ENCODE measurements at regions of chr11 and their contacts with region 1.

Region 1: DNA sequence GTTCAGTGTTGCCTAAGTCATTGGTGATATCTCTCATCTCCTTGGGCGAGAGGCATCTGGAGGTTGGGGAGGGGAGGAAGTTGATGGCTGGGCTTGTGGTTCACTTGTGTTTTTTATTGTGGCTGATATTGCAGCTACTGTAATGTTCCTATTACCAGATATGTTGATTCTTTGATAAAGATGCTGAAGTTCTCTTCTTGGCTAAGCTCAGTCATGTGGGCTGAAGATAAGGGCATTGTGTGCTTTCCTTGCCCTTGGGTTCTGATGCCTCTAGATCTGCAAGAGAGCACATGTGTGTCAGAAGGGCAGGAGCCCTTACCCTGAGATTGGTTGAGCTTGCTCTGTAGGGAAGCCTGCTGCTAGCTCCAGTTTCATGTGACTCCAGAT is 12.0 kb downstream of the STX3 start:
- DNase-seq: peak; percentile 79
- ATAC-seq: peak; percentile 78
- H3K4me3 Mint-ChIP-seq: no peak overlapping the region
- H3K27ac Mint-ChIP-seq: no peak overlapping the region
- H3K4me1 Mint-ChIP-seq: peaks cover 36% of the 10 kb centered on the region
- H3K27me3 Mint-ChIP-seq: no peaks in the 10 kb centered on the region

Region 2: GRCh38 chr11:59660621-59661020 is 106.6 kb before region 1 on chr11:
- CTCF ChIA-PET with region 1: no interaction called
- DNase-seq: no peak
- ATAC-seq: no peak
- H3K4me3 Mint-ChIP-seq: no peak overlapping the region
- H3K27ac Mint-ChIP-seq: peak overlapping the region; percentile 40
- H3K4me1 Mint-ChIP-seq: peaks cover 32% of the 10 kb centered on the region
- H3K27me3 Mint-ChIP-seq: no peaks in the 10 kb centered on the region

Region 3: DNA sequence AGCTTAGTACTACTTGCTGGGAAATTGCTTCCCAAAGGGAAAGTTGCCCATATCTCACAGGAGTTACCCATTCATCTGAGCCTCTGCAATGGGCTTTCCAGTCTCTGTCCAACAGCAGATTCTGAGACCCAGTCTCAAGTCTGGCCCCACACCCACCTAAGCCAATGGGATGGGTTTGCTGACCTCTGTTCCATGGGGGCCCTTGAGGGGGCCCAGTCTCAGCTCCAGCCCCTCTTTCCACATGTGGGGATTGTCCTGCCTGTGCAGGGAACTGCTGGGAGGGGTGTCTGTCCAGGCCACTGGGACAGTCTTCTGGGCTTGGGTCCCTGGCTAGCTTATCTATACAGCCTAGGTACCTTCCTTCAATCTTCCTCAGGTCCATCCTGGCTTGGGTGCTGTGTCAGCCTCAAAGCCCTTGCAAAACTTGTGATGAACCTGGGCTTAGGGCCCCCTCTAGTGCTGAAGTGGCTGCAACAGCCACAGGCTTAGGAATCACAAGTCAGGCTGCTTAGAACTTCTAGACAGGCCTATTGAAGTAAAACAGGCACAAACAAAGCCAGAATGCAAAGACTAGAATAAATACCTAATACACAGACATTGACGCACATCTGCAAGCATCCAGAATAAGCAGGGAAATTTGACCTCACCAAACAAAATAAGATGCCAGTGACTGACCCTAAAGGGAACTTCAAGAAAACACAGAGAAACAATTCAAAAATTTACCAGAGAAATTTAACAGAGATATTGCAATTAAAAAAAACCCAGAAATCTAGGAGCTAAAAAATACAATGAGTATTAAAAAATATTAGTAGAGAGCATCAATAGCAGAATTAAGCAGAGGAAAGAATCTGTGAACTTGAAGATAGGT is 86.7 kb before region 1 on chr11:
- CTCF ChIA-PET with region 1: no interaction called
- DNase-seq: peak; percentile 69
- ATAC-seq: peak; percentile 91
- H3K4me3 Mint-ChIP-seq: no peak overlapping the region
- H3K27ac Mint-ChIP-seq: no peak overlapping the region
- H3K4me1 Mint-ChIP-seq: no peaks in the 10 kb centered on the region
- H3K27me3 Mint-ChIP-seq: peaks cover 21% of the 10 kb centered on the region

Region 4: GRCh38 chr11:59746111-59746510 is 21.1 kb before region 1 on chr11:
- CTCF ChIA-PET with region 1: no interaction called
- DNase-seq: no peak
- ATAC-seq: no peak
- H3K4me3 Mint-ChIP-seq: no peak overlapping the region
- H3K27ac Mint-ChIP-seq: no peak overlapping the region
- H3K4me1 Mint-ChIP-seq: no peaks in the 10 kb centered on the region
- H3K27me3 Mint-ChIP-seq: peaks cover 51% of the 10 kb centered on the region

Region 5: GRCh38 chr11:59787816-59788215 is 20.6 kb after region 1 on chr11:
- CTCF ChIA-PET with region 1: interaction called, 17 read pairs
- DNase-seq: no peak
- ATAC-seq: no peak
- H3K4me3 Mint-ChIP-seq: no peak overlapping the region
- H3K27ac Mint-ChIP-seq: peak overlapping the region; percentile 1
- H3K4me1 Mint-ChIP-seq: peaks cover 52% of the 10 kb centered on the region
- H3K27me3 Mint-ChIP-seq: no peaks in the 10 kb centered on the region

Region 6: DNA sequence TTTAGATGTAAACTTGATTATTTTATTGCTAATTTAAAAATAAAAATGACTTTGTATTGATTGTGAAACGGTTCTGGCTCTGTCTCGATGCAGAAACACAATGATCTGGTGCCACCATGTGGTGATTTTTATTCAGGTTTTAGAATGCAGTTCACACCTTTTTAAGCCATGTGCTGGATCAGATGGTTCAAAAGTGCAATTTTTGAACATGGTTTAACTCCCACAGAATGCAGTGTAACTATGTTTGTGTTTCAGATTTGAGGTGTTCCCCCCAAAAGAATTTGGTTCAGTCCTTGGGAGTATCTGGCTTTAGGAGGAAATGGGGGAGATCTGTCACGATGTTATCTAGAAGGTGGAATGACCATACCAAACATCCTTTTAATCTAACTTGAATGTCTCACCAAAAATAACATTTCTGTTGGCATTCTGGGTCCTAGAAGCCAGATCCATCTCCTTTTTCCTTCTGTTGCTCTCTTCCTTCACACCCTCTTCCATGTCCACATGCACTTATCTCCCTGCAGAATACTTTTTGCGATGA is 35.5 kb after region 1 on chr11:
- CTCF ChIA-PET with region 1: interaction called, 12 read pairs
- DNase-seq: peak; percentile 54
- ATAC-seq: peak; percentile 88
- H3K4me3 Mint-ChIP-seq: no peak overlapping the region
- H3K27ac Mint-ChIP-seq: no peak overlapping the region
- H3K4me1 Mint-ChIP-seq: peaks cover 21% of the 10 kb centered on the region
- H3K27me3 Mint-ChIP-seq: no peaks in the 10 kb centered on the region

Measured in activated CD8-positive, alpha-beta memory T cell treated with anti-CD3 and anti-CD28 coated beads, Interleukin-2, amount 10 ng/mL, durations not matched to agents 7 days and 5 days (primary cell).